Endothelial cell of umbilical vein (primary cell): ENCODE measurements at regions of chr20 and their contacts with region 1.

Region 1: DNA sequence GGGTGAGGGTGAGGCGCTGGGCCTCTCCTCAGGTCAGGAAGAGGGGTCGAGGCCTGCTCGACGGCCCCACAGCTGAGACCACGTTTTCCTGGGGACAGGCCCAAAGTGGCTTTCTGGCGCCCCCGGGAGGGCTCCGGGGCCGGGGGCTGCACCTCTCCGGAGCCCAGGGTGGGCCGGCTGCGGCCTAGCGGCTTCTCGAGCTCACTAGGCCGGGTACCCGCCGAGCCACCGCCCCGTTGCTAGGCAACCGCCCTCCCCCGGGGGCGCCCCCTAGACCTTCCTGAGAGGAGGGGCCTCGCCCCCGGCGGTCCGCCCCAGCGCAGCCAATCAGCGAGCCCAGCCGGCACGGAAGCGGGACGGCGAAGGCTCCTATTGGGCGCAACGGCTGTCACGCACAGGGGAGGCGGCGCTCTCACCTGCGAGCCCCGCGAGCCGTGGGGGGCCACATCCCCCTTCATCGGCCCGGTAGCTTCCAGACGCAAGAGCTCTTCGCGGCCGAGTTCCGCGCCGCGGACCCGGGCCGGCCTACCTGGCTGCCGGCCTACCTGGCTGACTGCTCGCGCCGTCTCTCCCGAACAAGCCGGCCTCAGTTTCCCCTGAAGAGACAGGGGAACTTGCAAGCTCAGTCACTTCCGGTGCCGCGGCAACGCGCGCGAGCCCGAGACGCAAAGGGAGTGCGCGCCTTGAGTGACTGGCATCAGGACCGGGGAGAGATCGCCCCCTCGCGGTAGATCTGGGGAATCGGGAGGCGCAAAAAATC is 831 bp upstream of the BCL2L1 start:
- DNase-seq: peak; percentile 98
- H3K4me3 ChIP-seq: peak overlapping the region; percentile 61 to 94 (median 91)
- H3K27ac ChIP-seq: peak overlapping the region; percentile 90
- H3K4me1 ChIP-seq: peaks cover 23% of the 10 kb centered on the region
- H3K27me3 ChIP-seq: no peaks in the 10 kb centered on the region
- CTCF ChIP-seq: peak; percentile 84 to 93
- POLR2A ChIP-seq: no peak

Region 2: GRCh38 chr20:31560094-31560899 is 163.2 kb before region 1 on chr20:
- CTCF ChIA-PET with region 1: interaction called, 50 read pairs
- POLR2A ChIA-PET with region 1: no interaction called
- dilution Hi-C with region 1: no loop called
- intact Hi-C with region 1: loop called (anchors 1 kb)
- DNase-seq: peak; percentile 79
- H3K4me3 ChIP-seq: no peak overlapping the region
- H3K27ac ChIP-seq: peak overlapping the region; percentile 100
- H3K4me1 ChIP-seq: peaks cover 35% of the 10 kb centered on the region
- H3K27me3 ChIP-seq: no peaks in the 10 kb centered on the region
- CTCF ChIP-seq: peak; percentile 90 to 97
- POLR2A ChIP-seq: peak; percentile 41

Region 3: DNA sequence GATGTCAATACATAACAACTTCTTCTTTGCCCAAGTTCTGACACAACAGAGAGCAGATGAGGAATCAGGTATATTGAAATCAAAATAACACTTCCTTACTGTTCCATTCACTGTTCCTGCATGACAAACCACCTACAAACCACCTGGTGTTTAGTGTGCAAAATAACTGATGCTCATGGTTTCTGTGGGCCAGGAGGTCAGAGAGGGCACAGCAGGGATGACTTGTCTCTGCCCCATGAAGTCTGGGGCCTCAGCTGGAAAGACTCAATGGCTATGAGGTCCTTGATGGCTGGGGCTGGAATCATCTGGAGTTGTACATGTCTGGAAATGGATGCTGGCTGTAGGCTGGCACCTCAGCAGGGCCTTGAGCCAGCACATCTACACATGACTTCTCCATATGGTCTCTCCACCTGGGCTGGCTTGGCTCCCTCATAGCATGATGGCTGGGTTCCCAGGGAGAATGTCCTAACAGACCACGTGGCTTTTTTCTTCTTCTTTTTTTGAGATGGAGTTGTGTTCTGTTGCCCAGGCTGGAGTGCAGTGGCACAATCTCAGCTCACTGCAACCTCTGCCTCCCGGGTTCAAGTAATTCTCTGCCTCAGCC is 93.2 kb before region 1 on chr20:
- CTCF ChIA-PET with region 1: interaction called, 426 read pairs
- POLR2A ChIA-PET with region 1: interaction called, 4 read pairs
- dilution Hi-C with region 1: no loop called
- intact Hi-C with region 1: loop called (anchors 1 kb)
- DNase-seq: no peak
- H3K4me3 ChIP-seq: no peak overlapping the region
- H3K27ac ChIP-seq: no peak overlapping the region
- H3K4me1 ChIP-seq: no peaks in the 10 kb centered on the region
- H3K27me3 ChIP-seq: no peaks in the 10 kb centered on the region
- CTCF ChIP-seq: no peak
- POLR2A ChIP-seq: no peak

Region 4: GRCh38 chr20:31661625-31662371 is 61.7 kb before region 1 on chr20:
- CTCF ChIA-PET with region 1: interaction called, 658 read pairs
- POLR2A ChIA-PET with region 1: interaction called, 20 read pairs
- dilution Hi-C with region 1: no loop called
- intact Hi-C with region 1: loop called (anchors 1 kb)
- DNase-seq: peak; percentile 75
- H3K4me3 ChIP-seq: no peak overlapping the region
- H3K27ac ChIP-seq: peak overlapping the region; percentile 18
- H3K4me1 ChIP-seq: peaks cover 8% of the 10 kb centered on the region
- H3K27me3 ChIP-seq: no peaks in the 10 kb centered on the region
- CTCF ChIP-seq: peak; percentile 57 to 86
- POLR2A ChIP-seq: peak; percentile 80

Region 5: GRCh38 chr20:31691646-31692275 is 31.7 kb before region 1 on chr20:
- CTCF ChIA-PET with region 1: interaction called, 51 read pairs
- POLR2A ChIA-PET with region 1: no interaction called
- dilution Hi-C with region 1: no loop called
- intact Hi-C with region 1: no loop called
- DNase-seq: no peak
- H3K4me3 ChIP-seq: no peak overlapping the region
- H3K27ac ChIP-seq: no peak overlapping the region
- H3K4me1 ChIP-seq: peaks cover 26% of the 10 kb centered on the region
- H3K27me3 ChIP-seq: no peaks in the 10 kb centered on the region
- CTCF ChIP-seq: no peak
- POLR2A ChIP-seq: no peak

Region 6: DNA sequence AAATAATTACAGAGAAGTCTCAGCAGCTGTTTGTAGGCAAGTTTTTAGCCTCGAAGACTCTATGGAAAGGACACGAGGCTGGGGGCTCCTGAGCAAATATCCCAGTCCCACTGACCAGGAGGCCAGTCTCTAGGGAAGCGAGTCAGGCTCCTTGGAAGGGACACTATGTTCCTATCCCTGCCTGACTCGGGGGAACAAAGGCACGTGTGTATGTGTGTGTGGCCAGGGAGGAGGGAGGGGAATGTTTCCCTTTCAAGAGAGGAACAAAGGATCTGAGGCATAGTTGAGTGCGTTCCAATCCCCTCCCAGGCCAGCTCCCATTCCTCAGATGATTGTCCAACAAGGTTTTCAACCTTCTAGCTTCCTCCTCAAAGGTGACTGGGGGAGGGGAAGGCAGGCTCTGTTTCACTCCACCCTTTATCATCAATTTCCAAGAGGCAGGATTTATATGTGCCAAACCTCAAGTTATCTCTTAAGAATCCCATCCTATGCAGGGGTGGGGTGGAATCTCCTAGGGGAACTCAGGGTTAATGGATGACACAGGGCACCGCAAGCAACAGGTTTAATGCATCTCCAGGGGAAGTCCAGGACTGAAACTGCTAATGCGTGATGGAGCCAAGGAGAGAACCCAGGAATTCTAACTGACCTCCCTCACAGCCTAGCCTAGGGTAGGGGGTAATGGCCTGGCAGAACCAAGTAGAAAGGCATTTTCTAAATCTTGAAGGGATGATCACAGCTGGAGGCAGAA is 10.8 kb before region 1 on chr20:
- CTCF ChIA-PET with region 1: interaction called, 48 read pairs
- POLR2A ChIA-PET with region 1: interaction called, 22 read pairs
- dilution Hi-C with region 1: no loop called
- intact Hi-C with region 1: loop called (anchors 1 kb)
- DNase-seq: peak; percentile 91
- H3K4me3 ChIP-seq: peak overlapping the region in 1 of 3 experiments; percentile 26
- H3K27ac ChIP-seq: peak overlapping the region; percentile 97
- H3K4me1 ChIP-seq: peaks cover 55% of the 10 kb centered on the region
- H3K27me3 ChIP-seq: no peaks in the 10 kb centered on the region
- CTCF ChIP-seq: no peak
- POLR2A ChIP-seq: no peak

Region 7: DNA sequence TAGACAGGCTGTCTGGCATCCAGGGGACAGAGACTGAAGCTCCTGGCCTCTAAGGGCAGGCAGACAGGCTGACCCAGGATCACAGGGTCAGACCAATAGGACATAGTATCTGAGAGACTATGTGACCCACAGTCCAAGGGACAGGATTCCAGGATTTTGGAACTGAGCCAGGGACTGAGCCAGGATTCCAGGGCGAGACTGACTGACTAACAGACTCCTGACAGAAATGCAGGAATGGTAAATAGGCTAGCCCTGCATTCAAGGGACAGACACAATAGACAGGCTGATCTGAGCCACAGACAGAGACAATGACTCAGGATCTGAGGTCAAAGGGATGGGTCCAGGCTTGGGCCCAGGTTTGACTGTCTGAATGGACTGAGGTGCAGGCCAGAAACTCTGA is 264.2 kb after region 1 on chr20:
- CTCF ChIA-PET with region 1: no interaction called
- POLR2A ChIA-PET with region 1: no interaction called
- dilution Hi-C with region 1: no loop called
- intact Hi-C with region 1: no loop called
- DNase-seq: no peak
- H3K4me3 ChIP-seq: no peak overlapping the region
- H3K27ac ChIP-seq: no peak overlapping the region
- H3K4me1 ChIP-seq: peaks cover 5% of the 10 kb centered on the region
- H3K27me3 ChIP-seq: peaks cover 4 to 7% of the 10 kb centered on the region in 2 experiments
- CTCF ChIP-seq: no peak
- POLR2A ChIP-seq: no peak